Calu3 (cell line): ENCODE measurements at regions of chr2 and their contacts with region 1.

Region 1: GRCh38 chr2:72579591-72580180 is 246.1 kb downstream of the EXOC6B start:
- DNase-seq: no peak
- H3K4me3 Mint-ChIP-seq: no peak overlapping the region
- H3K27ac Mint-ChIP-seq: no peak overlapping the region
- H3K4me1 Mint-ChIP-seq: no peaks in the 10 kb centered on the region
- H3K27me3 Mint-ChIP-seq: no peaks in the 10 kb centered on the region
- CTCF ChIP-seq: peak; percentile 46

Region 2: GRCh38 chr2:71530641-71531332 is 1048.9 kb before region 1 on chr2:
- CTCF ChIA-PET with region 1: no interaction called
- intact Hi-C with region 1: loop called (anchors 5 kb)
- DNase-seq: peak; percentile 30
- H3K4me3 Mint-ChIP-seq: no peak overlapping the region
- H3K27ac Mint-ChIP-seq: no peak overlapping the region
- H3K4me1 Mint-ChIP-seq: no peaks in the 10 kb centered on the region
- H3K27me3 Mint-ChIP-seq: peaks cover 36% of the 10 kb centered on the region
- CTCF ChIP-seq: peak; percentile 65

Region 3: DNA sequence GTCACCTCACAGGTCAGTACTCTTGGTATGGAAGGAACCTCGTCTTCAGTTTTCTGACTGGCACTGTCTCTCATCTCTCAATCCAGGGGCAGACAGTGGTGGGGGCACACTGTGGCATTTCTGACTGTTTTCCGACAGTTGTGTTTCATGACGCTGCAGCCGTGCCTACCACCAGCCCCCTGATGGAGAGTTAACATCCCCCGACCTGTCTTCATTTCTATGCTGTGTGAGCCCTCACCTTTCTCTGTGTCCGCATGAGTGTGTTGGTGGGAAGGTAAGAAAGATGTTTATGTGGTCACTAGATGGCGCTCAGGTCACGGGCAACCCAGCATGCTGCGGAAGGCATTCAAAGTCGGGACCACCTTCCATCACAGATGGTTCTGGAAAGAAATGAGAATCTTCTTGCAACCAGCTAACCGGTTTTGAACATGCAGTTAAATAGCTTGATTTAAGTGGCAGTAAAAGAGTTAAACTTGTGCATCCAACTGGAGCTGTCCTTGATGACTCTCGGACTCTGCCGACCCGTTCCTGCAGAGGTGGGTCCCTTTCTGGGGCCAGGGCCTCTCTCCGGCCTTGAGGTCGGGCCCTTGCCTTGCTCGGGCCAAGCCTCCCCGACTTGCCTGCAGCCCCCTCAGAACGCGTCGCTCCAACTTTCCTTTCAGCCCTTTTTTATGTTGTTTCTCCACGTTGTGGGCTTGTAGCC is 1034.0 kb before region 1 on chr2:
- CTCF ChIA-PET with region 1: no interaction called
- intact Hi-C with region 1: loop called (anchors 5 kb)
- DNase-seq: peak; percentile 59
- H3K4me3 Mint-ChIP-seq: peak overlapping the region; percentile 54
- H3K27ac Mint-ChIP-seq: no peak overlapping the region
- H3K4me1 Mint-ChIP-seq: peaks cover 17% of the 10 kb centered on the region
- H3K27me3 Mint-ChIP-seq: peaks cover 64% of the 10 kb centered on the region
- CTCF ChIP-seq: peak; percentile 74

Region 4: DNA sequence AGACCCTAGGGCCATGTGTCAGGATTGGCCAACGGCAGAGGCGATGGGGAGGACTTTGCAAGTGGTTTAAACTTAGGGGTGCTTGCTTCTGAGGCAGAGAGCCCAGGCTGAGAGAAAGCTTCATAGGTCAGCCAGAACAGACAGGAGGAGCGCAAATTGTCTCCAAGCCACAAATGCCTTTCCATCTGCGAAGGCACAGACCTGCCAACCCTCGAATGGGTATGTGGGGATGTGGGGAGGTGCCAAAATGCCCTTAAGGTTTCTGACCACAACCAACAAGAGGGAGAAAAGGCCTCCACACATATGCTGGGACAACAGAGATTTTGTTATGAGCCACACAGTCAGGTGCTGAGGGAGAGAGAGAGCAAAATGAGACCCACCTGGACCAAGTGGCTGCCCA is 715.6 kb before region 1 on chr2:
- CTCF ChIA-PET with region 1: no interaction called
- intact Hi-C with region 1: no loop called
- DNase-seq: no peak
- H3K4me3 Mint-ChIP-seq: no peak overlapping the region
- H3K27ac Mint-ChIP-seq: no peak overlapping the region
- H3K4me1 Mint-ChIP-seq: no peaks in the 10 kb centered on the region
- H3K27me3 Mint-ChIP-seq: peaks cover 100% of the 10 kb centered on the region
- CTCF ChIP-seq: no peak

Region 5: DNA sequence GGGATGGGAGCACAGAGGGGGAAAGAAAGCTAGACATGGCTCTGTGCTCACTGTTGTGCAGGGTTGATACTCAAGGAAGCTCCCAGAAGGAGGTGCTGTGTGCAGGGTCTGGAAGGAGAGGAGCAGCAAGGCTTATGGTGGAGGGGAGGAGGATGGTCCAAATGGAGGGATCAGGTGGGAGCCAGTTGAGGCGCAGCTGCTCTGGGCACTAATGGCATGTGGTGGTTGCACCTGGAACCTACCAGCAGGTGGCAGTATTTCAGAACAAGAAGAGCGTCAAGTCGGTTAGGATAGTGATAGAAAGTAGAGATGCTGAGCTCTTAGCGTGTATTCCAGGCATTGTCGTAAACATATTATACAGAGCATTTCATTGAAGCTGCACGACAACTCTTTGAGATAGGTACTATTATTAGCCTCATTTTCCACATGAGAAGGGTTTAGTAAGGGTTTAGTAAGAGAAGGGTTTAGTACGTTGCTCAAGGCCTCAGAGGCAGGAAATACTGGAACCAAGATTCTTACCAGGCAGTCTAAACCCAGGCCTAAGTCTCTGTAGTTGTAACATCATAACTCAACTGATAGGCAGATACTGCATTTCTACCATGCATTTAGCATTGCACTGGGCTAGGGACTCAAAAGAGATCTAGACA is 655.7 kb before region 1 on chr2:
- CTCF ChIA-PET with region 1: interaction called, 7 read pairs
- intact Hi-C with region 1: loop called (anchors 1 kb)
- DNase-seq: peak; percentile 77
- H3K4me3 Mint-ChIP-seq: no peak overlapping the region
- H3K27ac Mint-ChIP-seq: no peak overlapping the region
- H3K4me1 Mint-ChIP-seq: no peaks in the 10 kb centered on the region
- H3K27me3 Mint-ChIP-seq: peaks cover 18% of the 10 kb centered on the region
- CTCF ChIP-seq: peak; percentile 79

Region 6: DNA sequence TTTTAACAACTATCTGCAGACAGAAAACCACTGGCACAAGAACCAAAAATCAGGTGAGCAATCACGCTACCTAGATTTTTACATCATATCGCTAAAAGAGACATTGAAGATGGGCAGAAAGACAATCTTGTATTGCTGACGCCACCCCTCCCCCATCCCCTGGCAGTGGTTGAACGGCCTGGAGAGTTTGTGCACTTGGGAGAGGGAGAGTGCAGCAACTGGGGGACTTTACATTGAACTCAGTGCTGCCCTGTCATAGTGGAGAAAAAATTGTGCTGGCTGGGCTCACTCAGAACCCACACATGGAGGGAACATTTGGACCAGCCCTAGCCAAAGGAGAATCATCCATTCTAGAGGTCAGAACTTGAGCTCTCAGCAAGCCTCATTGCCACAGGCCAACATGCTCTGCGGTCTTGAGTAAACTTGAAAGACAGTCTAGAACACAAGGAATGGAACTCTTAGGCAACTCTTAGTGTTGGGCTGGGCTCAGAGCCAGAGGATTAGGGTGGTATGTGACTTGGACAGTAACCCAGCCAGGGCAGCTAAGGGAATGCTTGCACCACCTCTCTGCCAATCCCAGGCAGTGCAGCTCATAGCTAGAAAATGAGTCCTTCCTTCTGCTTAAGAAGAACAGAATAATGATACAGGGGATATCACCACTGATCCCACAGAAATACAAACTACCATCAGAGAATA is 212.0 kb before region 1 on chr2:
- CTCF ChIA-PET with region 1: no interaction called
- intact Hi-C with region 1: loop called (anchors 10 kb)
- DNase-seq: peak; percentile 77
- H3K4me3 Mint-ChIP-seq: no peak overlapping the region
- H3K27ac Mint-ChIP-seq: no peak overlapping the region
- H3K4me1 Mint-ChIP-seq: no peaks in the 10 kb centered on the region
- H3K27me3 Mint-ChIP-seq: no peaks in the 10 kb centered on the region
- CTCF ChIP-seq: peak; percentile 26

Region 7: DNA sequence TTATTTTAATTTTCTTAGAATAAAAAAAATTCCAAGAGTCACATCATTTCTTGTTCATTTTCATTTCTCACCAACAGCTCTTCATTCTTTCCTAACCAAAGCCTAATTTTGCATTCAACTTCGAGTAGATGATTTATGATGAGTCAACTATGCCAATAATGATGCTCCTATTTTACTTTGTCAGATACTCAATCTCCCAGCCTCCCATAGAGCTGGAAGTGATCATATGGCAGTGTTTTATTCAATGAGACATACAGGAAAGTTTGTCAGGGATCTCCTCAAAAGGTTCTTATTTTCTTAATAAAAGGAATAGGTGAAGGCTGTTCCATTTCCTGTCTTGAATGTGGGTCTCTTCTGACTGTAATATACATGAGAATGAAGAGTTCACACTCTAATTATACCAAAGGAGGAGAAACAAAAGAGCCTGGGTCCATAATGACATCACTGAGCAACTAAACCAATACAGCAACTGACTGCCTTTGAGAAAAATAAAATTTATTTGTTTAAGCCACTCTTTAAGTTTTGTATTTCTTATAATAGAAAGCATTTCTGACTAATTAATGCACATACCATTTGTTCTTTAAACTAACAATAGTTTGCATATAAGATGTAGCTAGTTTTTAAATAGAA is 200.8 kb before region 1 on chr2:
- CTCF ChIA-PET with region 1: no interaction called
- intact Hi-C with region 1: no loop called
- DNase-seq: no peak
- H3K4me3 Mint-ChIP-seq: no peak overlapping the region
- H3K27ac Mint-ChIP-seq: no peak overlapping the region
- H3K4me1 Mint-ChIP-seq: no peaks in the 10 kb centered on the region
- H3K27me3 Mint-ChIP-seq: no peaks in the 10 kb centered on the region
- CTCF ChIP-seq: no peak

Region 8: DNA sequence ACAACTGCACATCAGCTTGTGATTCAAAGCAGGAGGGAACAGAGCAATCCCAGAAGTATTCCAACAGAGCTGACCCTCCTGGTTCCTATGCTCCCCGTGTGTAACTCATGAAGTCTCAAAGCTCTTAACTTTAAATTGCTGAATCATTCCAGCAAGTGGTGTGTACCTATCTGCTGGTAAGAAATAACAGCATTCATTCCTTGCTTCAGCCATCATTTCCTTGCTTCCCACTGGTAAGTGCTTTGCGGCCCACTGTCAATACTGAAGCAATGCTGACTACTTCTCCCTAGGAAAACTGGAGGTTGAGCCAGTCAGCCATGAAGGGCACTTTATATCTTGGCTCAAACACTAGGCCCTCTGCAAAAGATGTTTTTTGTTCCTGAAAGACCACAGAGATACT is 23.8 kb after region 1 on chr2:
- CTCF ChIA-PET with region 1: no interaction called
- intact Hi-C with region 1: no loop called
- DNase-seq: no peak
- H3K4me3 Mint-ChIP-seq: no peak overlapping the region
- H3K27ac Mint-ChIP-seq: no peak overlapping the region
- H3K4me1 Mint-ChIP-seq: no peaks in the 10 kb centered on the region
- H3K27me3 Mint-ChIP-seq: no peaks in the 10 kb centered on the region
- CTCF ChIP-seq: no peak

Region 9: DNA sequence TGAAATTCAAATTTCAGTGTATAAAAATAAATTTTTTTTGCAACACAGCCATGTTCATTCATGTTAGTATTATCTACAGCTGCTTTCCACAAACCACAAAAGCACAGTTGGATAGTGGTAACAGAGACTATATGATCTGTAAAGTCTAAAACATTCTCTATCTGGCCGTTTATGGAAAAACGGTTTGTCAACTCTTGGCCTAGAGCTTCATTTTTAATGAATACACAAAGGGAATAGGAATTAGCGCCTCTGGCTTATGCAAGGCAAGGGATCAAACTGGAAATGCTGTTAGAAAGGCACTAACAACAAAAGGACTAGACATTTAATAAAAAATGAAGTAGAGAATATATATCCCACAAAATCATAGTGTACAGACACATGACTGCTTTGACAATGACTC is 34.2 kb after region 1 on chr2:
- CTCF ChIA-PET with region 1: no interaction called
- intact Hi-C with region 1: no loop called
- DNase-seq: no peak
- H3K4me3 Mint-ChIP-seq: no peak overlapping the region
- H3K27ac Mint-ChIP-seq: no peak overlapping the region
- H3K4me1 Mint-ChIP-seq: no peaks in the 10 kb centered on the region
- H3K27me3 Mint-ChIP-seq: no peaks in the 10 kb centered on the region
- CTCF ChIP-seq: no peak

Region 10: GRCh38 chr2:72745679-72746368 is 166.1 kb after region 1 on chr2:
- CTCF ChIA-PET with region 1: no interaction called
- intact Hi-C with region 1: loop called (anchors 5 kb)
- DNase-seq: peak; percentile 43
- H3K4me3 Mint-ChIP-seq: no peak overlapping the region
- H3K27ac Mint-ChIP-seq: no peak overlapping the region
- H3K4me1 Mint-ChIP-seq: no peaks in the 10 kb centered on the region
- H3K27me3 Mint-ChIP-seq: no peaks in the 10 kb centered on the region
- CTCF ChIP-seq: peak; percentile 47